ENCODE measurements at regions of chr9 and their contacts with region 1.

Region 1: DNA sequence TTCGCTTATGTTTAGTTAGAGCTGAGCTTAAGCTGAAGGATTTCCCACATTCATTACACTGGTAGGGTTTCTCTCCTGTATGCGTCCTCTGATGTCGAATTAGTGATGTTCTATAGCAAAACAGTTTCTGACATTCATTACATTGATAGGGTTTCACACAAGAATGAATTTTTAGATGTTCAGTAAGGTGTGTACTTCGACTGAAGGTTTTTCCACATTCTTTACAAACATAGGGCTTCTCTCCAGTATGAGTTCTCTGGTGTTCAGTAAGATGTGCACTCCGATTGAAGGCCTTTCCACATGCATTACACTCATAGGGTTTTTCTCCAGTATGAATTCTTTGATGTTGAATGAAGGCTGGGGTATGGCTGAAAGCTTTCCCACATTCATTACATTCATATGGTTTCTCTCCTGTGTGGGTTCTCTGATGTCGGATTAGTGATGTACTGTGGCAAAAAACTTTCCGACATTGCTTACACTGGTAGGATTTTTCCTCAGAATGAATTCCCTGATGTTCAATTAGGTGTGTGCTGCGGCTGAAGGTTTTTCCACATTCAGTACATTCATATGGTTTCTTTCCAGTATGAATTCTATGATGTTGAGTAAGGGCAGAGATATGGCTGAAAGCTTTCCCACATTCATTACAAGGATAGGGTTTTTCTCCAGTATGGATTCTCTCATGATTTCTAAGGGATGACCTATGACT is 14.6 kb downstream of the ZNF883 start:
- DNase-seq: no peak
- ATAC-seq: no peak
- H3K4me3 ChIP-seq: no peak overlapping the region
- H3K27ac ChIP-seq: no peak overlapping the region
- H3K4me1 ChIP-seq: no peaks in the 10 kb centered on the region
- H3K27me3 ChIP-seq: no peaks in the 10 kb centered on the region
- CTCF ChIP-seq: no peak
- POLR2A ChIP-seq: no peak

Region 2: GRCh38 chr9:113042884-113043657 is 45.7 kb after region 1 on chr9:
- intact Hi-C with region 1: loop called in 1 of 10 experiments (anchors 2 kb)
- DNase-seq: no peak
- ATAC-seq: no peak
- H3K4me3 ChIP-seq: no peak overlapping the region
- H3K27ac ChIP-seq: no peak overlapping the region
- H3K4me1 ChIP-seq: no peaks in the 10 kb centered on the region
- H3K27me3 ChIP-seq: no peaks in the 10 kb centered on the region
- CTCF ChIP-seq: no peak
- POLR2A ChIP-seq: no peak